Activated CD4-positive, alpha-beta T cell treated with anti-CD3 and anti-CD28 coated beads for 36 hours (primary cell): ENCODE measurements at regions of chr4 and their contacts with region 1.

Region 1: GRCh38 chr4:81405894-81406401 is 65.8 kb downstream of the RASGEF1B start:
- DNase-seq: peak; percentile 36
- ATAC-seq: peak; percentile 78
- H3K4me3 Mint-ChIP-seq: no peak overlapping the region
- H3K27ac Mint-ChIP-seq: no peak overlapping the region
- H3K4me1 Mint-ChIP-seq: peaks cover 3% of the 10 kb centered on the region
- H3K27me3 Mint-ChIP-seq: no peaks in the 10 kb centered on the region

Region 2: DNA sequence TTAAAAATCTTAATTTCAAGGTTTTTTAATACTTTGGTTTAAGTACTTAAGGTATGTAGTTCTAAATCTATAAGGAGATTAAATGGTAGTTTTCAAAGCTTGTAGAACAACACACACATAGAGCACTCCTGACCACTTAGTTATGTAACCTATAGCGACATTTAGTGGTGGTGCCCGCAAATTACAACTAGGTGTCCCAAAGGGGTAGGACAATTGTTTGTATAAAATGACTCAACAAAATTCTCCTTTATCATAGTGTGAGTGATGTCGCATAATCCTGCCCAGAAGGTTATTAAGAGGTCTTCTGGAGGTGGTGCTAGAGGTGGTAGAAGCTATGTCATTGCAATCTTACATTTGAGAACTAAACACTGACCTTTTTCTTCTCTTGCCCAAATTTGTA is 438.8 kb after region 1 on chr4:
- CTCF ChIA-PET with region 1: interaction called, 6 read pairs
- POLR2A ChIA-PET with region 1: no interaction called
- intact Hi-C with region 1: loop called (anchors 1 kb)
- DNase-seq: peak; percentile 77
- ATAC-seq: peak; percentile 92
- H3K4me3 Mint-ChIP-seq: no peak overlapping the region
- H3K27ac Mint-ChIP-seq: no peak overlapping the region
- H3K4me1 Mint-ChIP-seq: peaks cover 7% of the 10 kb centered on the region
- H3K27me3 Mint-ChIP-seq: no peaks in the 10 kb centered on the region

Region 3: GRCh38 chr4:82123934-82124333 is 718.0 kb after region 1 on chr4:
- CTCF ChIA-PET with region 1: no interaction called
- POLR2A ChIA-PET with region 1: no interaction called
- intact Hi-C with region 1: loop called in 1 of 2 experiments (anchors 5 kb)
- DNase-seq: peak; percentile 15
- ATAC-seq: no peak
- H3K4me3 Mint-ChIP-seq: no peak overlapping the region
- H3K27ac Mint-ChIP-seq: no peak overlapping the region
- H3K4me1 Mint-ChIP-seq: peaks cover 10% of the 10 kb centered on the region
- H3K27me3 Mint-ChIP-seq: no peaks in the 10 kb centered on the region

Region 4: GRCh38 chr4:82268050-82268825 is 862.3 kb after region 1 on chr4:
- CTCF ChIA-PET with region 1: interaction called, 5 read pairs
- POLR2A ChIA-PET with region 1: no interaction called
- intact Hi-C with region 1: loop called (anchors 1 kb)
- DNase-seq: peak; percentile 68
- ATAC-seq: peak; percentile 97
- H3K4me3 Mint-ChIP-seq: no peak overlapping the region
- H3K27ac Mint-ChIP-seq: no peak overlapping the region
- H3K4me1 Mint-ChIP-seq: peaks cover 22% of the 10 kb centered on the region
- H3K27me3 Mint-ChIP-seq: no peaks in the 10 kb centered on the region

Region 5: DNA sequence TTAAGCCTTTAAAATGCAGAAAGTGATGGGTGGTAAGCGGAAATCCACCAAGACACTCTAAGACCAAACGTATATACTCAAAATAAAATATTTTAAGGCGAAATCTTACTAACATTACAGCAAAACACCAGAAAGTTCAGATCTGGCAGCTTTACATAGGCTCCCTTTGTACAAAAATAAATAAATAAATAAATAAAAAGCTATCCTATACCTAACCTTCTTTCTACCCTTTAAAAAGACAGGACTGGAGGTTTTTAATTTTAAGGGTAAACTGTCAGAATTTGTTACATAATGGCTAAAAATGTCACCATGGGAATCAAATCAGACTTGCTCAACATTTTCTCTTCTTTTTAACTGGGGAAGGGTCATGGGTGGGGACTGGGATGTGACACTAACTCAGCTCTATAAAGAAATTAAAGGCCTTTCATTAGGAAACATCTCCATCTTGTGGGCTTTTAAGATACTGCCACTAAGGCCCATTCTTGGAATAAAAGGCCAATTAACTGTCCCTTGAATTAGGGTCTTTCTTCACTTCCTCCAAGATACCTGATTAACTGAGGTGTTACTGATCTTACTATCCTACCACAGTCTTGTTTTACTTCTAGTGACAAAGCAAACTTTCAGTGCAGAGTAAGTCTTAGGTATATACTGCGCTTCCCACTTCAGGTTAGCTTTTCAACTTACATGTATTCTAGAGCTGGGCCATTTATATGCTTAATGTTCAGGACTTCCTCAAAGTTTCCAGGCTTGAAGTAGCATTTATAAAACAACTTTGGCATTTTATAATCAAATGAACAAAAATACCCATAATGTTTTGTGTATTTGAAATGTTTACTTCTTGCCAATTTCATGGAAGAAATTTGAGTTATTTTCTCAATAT is 954.6 kb after region 1 on chr4:
- CTCF ChIA-PET with region 1: interaction called, 4 read pairs
- POLR2A ChIA-PET with region 1: no interaction called
- intact Hi-C with region 1: loop called in 1 of 2 experiments (anchors 5 kb)
- DNase-seq: no peak
- ATAC-seq: peak; percentile 42
- H3K4me3 Mint-ChIP-seq: no peak overlapping the region
- H3K27ac Mint-ChIP-seq: no peak overlapping the region
- H3K4me1 Mint-ChIP-seq: peaks cover 79% of the 10 kb centered on the region
- H3K27me3 Mint-ChIP-seq: no peaks in the 10 kb centered on the region